Mammary epithelial cell (primary cell): ENCODE measurements at regions of chr2 and their contacts with region 1.

Region 1: DNA sequence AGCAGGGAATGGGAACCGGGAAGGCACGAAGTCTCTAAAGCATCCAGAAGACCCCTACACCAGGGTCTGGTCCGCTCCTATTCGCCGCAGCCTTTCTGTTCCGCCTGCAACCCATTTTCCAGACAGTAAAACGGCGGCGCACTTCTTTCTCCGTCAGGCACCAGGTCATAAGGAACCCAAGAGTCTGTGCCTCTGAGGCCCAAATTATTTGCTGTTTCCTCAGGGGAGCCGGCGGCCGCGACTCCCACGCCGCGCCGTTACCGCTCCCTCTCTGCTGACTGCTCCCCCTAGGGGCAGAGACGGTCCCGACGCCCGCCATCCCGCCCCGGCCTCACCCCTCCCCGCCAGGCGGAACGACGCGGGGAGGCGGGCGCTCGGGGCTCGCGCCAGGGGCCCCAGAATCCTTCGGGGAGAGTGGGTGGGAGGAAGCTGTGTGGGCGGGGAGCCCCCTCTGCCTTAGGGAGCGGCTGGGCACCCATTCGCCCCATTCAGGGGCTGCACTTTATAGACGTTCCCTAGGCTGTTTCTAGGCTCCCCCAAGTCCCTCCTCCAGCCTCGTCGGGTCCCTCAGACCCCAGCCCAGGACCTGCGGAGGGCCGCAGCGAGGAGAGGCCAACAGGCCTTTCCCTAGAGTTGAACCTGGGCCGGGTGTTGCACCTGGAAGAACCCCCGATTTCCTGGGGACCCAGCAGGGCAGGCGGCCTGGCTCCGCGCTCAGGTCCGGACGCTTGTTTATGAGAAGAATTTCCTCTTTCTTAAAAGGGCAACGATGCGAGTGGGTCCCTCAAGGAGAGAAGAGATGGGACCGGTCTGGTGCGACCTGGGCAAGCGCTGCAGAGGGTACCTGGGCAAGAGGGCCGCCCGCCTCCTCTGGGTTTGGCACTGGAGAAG is 3.6 kb upstream of the CTDSP1 start:
- DNase-seq: peak; percentile 94
- H3K4me3 ChIP-seq: peak overlapping the region; percentile 58 to 71 (median 65)
- H3K27ac ChIP-seq: peak overlapping the region; percentile 76
- H3K4me1 ChIP-seq: peaks cover 32% of the 10 kb centered on the region
- H3K27me3 ChIP-seq: no peaks in the 10 kb centered on the region
- CTCF ChIP-seq: peak; percentile 49 to 80

Region 2: DNA sequence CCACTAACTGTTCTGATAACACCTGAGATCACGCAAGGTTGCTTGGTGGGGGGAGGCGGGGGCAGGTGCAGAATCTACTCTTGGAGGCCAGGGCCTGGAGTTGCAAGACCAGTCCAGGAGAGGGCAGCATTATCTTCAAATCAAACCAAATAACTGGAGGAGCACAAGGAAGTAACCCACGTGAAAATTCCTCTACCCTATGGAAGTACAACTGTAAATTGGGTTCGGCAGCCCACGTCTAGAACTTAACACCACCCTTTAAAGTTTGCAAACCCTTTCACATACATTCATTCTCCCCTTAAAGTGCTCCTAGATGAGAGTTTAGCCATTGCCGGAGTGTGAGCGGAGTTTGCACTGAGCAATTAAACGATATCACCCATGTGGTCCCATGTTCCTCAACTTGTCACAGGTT is 209.7 kb before region 1 on chr2:
- CTCF ChIA-PET with region 1: interaction called, 3 read pairs
- dilution Hi-C with region 1: no loop called
- in situ Hi-C with region 1: no loop called
- intact Hi-C with region 1: loop called (anchors 1 kb)
- DNase-seq: peak; percentile 57
- H3K4me3 ChIP-seq: no peak overlapping the region
- H3K27ac ChIP-seq: no peak overlapping the region
- H3K4me1 ChIP-seq: peaks cover 4% of the 10 kb centered on the region
- H3K27me3 ChIP-seq: no peaks in the 10 kb centered on the region
- CTCF ChIP-seq: peak; percentile 82 to 84

Region 3: DNA sequence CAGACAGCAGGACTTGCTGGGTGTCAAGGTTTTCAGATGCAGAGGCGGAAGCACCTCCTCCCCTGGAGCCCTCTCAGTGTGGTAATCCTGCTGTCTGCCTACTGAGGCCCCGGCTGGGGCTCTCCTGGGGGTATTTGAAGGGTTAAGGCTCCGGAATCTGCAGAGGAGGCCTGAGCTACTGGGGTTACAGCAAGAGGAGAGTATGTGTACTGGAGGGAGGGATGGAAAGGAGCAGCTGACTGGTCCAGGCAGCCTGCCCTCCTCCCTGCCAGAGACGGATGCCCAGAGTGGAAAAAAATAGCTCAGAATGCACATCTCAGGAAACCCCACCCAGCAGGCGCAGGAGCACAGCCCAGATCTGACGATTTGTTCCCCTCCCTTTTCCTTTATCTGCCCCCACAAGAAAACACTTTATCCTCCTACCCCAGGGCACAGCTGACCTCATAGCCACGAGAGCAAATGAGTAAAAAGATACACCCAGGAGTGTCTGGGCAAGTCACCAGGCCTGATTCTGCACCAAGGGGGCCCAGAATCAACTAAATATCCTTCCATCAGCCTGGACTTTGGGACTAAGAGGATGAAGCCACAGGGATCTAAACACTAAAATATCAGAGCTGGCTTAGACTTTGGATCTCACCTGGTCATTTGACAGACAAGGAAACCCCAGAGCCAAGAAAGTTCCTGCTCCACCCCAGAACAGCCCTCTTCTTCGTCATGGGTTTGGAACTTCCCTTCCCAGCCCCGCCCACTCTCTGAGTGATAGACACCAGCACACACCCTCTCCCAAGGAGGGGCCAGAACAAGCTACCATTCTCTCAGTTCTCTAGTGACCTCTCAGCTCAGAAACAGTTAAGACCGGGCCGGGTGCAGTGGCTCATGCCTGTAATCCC is 109.2 kb before region 1 on chr2:
- CTCF ChIA-PET with region 1: interaction called, 14 read pairs
- dilution Hi-C with region 1: no loop called
- in situ Hi-C with region 1: no loop called
- intact Hi-C with region 1: no loop called
- DNase-seq: peak; percentile 98
- H3K4me3 ChIP-seq: peak overlapping the region; percentile 29 to 48 (median 45)
- H3K27ac ChIP-seq: peak overlapping the region; percentile 99
- H3K4me1 ChIP-seq: peaks cover 78% of the 10 kb centered on the region
- H3K27me3 ChIP-seq: no peaks in the 10 kb centered on the region
- CTCF ChIP-seq: no peak

Region 4: GRCh38 chr2:218301176-218301819 is 94.7 kb before region 1 on chr2:
- CTCF ChIA-PET with region 1: interaction called, 4 read pairs
- dilution Hi-C with region 1: loop called (anchors 5 kb)
- in situ Hi-C with region 1: loop called (anchors 5 to 10 kb)
- intact Hi-C with region 1: loop called (anchors 1 kb)
- DNase-seq: peak; percentile 74
- H3K4me3 ChIP-seq: no peak overlapping the region
- H3K27ac ChIP-seq: no peak overlapping the region
- H3K4me1 ChIP-seq: peaks cover 24% of the 10 kb centered on the region
- H3K27me3 ChIP-seq: no peaks in the 10 kb centered on the region
- CTCF ChIP-seq: peak; percentile 94

Region 5: GRCh38 chr2:218448934-218449333 is 52.9 kb after region 1 on chr2:
- CTCF ChIA-PET with region 1: no interaction called
- dilution Hi-C with region 1: no loop called
- in situ Hi-C with region 1: no loop called
- intact Hi-C with region 1: no loop called
- DNase-seq: peak; percentile 45
- H3K4me3 ChIP-seq: no peak overlapping the region
- H3K27ac ChIP-seq: no peak overlapping the region
- H3K4me1 ChIP-seq: peaks cover 16% of the 10 kb centered on the region
- H3K27me3 ChIP-seq: no peaks in the 10 kb centered on the region
- CTCF ChIP-seq: no peak

Region 6: DNA sequence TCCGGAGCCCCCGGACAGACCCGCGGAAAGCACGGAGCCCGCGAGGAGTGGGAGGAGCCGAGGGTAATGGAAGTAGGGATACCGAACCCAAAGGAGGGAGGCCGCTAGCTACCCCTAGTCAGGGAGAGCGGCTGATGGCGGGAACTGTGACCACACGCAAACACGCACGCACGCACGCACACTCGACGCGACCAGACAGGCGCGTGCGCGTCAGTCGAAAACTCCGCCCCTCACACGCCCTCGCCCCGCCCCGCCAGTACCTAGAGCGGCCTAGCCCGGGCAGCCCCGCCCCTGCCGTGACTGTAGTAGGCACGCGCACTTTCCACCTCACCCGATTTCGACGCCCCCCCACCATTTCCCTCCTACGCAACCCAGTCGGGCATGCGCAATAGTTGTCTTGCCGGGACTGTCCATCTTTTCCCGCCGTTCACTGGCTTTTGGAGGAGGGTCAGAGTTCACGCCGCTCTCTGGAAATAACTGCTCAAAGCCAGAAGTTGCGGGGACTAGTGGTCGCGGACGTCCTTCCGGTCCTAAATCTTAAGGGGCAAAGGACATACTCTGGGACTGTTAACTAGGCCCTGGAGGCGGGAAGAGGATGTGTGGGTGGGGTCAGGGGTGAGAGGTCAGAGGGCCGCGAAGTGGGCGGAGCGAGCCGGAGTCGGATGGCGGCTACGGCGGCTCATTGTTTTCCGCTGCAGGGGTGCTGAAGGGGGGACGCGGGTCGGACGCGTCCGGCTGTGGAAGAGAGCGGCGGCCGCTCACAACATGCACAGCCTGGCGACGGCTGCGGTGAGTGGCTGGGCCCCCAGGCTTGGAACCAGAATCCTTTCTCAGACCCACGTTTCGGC is 172.4 kb after region 1 on chr2 and contains the starts of genes CNOT9 and USP37:
- CTCF ChIA-PET with region 1: no interaction called
- dilution Hi-C with region 1: no loop called
- in situ Hi-C with region 1: no loop called
- intact Hi-C with region 1: loop called (anchors 2 kb)
- DNase-seq: peak; percentile 98
- H3K4me3 ChIP-seq: peak within 1 kb of the TSS; percentile 62 to 98 (median 94)
- H3K27ac ChIP-seq: peak within 1 kb of the TSS; percentile 96
- H3K4me1 ChIP-seq: peaks cover 26% of the 10 kb centered on the region
- H3K27me3 ChIP-seq: no peaks in the 10 kb centered on the region
- CTCF ChIP-seq: no peak
- total RNA-seq, gene CNOT9: 39.8 to 53.3 TPM
- total RNA-seq, gene USP37: 10.7 to 14.6 TPM